ENCODE measurements at regions of chr1 and their contacts with region 1.

Region 1: DNA sequence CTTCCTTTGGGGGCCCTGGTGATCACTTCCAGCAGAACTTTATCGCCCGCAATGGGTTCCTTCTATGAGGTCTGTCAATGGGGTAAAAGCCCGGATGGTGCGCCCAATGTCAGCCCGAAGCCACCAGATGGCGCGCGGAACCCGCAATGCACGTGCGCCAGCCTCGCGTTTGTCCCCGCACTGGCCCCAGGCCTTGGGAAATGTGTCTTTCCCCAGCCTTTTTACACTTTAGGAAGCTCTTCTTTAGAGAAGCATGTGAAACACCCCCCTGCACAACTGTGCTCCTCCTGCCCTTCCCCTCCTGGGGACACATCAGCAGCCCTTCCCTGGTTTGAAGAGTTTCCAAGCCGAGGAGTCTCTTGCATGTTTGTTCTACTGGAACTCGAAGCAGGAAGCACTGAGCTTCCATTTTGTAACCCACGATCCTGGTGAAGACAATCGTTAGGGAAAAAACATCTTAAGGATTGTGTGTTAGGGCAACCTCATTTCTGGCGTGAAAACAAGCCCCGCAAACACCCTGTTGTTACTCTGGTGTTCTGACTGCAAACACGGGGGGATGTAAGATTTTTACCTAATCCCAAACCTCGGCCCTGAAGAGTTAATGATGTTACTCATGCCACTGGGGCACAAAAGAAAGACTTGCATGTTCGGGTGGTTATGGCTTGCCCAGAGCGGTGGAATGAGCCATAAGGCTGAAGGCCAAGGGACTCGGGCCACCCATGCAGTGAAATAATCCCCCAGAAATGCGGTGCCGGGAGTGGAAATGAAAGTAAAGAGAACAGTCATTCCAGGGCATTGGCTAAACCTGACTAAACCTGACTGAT is 20.4 kb upstream of the TARBP1 start:
- DNase-seq: peak; percentile 84 to 95 (median 90)
- ATAC-seq: peak; percentile 97 to 100 (median 98)
- H3K4me3 ChIP-seq: no peak overlapping the region
- H3K27ac ChIP-seq: peak overlapping the region; percentile 39 to 74 (median 46)
- H3K4me1 ChIP-seq: peaks cover 0 to 14% (median 7%) of the 10 kb centered on the region in 3 donors
- H3K27me3 ChIP-seq: no peaks in the 10 kb centered on the region
- CTCF ChIP-seq: peak; percentile 71 to 88 (median 80)

Region 2: GRCh38 chr1:234579967-234580366 is 80.6 kb after region 1 on chr1:
- intact Hi-C with region 1: loop called in 1 of 3 experiments (anchors 10 kb)
- DNase-seq: no peak
- ATAC-seq: no peak
- H3K4me3 ChIP-seq: no peak overlapping the region
- H3K27ac ChIP-seq: no peak overlapping the region
- H3K4me1 ChIP-seq: no peaks in the 10 kb centered on the region
- H3K27me3 ChIP-seq: no peaks in the 10 kb centered on the region
- CTCF ChIP-seq: no peak

Region 3: GRCh38 chr1:235075188-235075926 is 576.0 kb after region 1 on chr1:
- intact Hi-C with region 1: loop called in 2 of 3 experiments (anchors 5 kb)
- DNase-seq: peak in 5 of 6 donors; percentile 57 to 73 (median 62)
- ATAC-seq: peak in 3 of 4 donors; percentile 7 to 51 (median 11)
- H3K4me3 ChIP-seq: no peak overlapping the region
- H3K27ac ChIP-seq: peak overlapping the region; percentile 90 to 98 (median 96)
- H3K4me1 ChIP-seq: peaks cover 37 to 72% (median 64%) of the 10 kb centered on the region in 3 donors
- H3K27me3 ChIP-seq: no peaks in the 10 kb centered on the region
- CTCF ChIP-seq: no peak

Measured in pancreas (tissue), 10 donors.